Activated B cell treated with CpG ODN at 0.5 μM for 24 hours (primary cell): ENCODE measurements at regions of chr17 and their contacts with region 1.

Region 1: DNA sequence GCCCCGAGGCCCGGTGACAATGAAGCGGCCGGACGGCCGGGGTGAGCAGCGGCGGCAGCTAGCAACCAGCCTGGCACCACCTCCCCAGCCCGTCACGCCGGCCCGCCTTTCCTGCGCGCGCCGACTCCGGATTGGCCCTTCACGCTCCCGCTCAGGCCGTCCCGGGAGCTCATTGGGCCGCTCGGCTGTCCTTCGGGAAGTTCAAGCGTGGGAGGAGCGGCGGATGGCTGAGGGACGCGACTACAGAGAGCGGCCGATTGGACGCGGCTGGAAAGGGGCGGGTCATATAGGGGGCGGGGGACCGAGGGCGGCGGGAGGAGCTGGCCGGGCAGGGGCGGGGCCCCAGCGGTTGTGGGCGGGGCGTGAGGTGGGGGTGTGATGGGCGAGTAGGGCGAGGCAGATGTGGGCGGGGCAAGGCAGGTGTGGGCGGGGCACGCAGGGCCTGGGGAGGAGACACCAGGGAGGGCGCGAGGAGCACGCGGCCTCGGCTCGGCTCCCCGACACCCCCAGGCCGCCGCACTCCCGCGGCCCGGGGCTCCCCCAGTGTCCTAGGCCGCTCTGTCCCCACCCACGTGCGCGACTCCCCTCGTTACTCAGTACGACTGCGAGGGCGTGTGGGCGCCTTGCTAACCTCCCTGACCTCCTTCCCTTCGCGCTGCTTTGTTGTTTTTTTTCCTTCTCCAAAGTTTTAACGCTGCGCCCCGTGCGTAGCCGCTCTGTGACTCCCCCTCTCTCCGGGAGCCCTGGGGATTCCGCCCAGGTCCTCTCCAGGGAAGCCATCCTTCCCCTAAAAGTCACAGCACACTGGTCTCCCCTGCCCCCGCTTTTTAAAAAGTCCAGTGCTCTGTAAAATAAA is at the start of gene CEP131:
- DNase-seq: peak; percentile 100
- ATAC-seq: peak; percentile 89
- H3K4me3 Mint-ChIP-seq: peak within 1 kb of the TSS; percentile 85
- H3K27ac Mint-ChIP-seq: peak within 1 kb of the TSS; percentile 91
- H3K4me1 Mint-ChIP-seq: peaks cover 33% of the 10 kb centered on the region
- H3K27me3 Mint-ChIP-seq: no peaks in the 10 kb centered on the region
- CTCF ChIP-seq: no peak
- total RNA-seq, gene CEP131: 14.2 and 15.9 TPM in 2 replicates

Region 2: DNA sequence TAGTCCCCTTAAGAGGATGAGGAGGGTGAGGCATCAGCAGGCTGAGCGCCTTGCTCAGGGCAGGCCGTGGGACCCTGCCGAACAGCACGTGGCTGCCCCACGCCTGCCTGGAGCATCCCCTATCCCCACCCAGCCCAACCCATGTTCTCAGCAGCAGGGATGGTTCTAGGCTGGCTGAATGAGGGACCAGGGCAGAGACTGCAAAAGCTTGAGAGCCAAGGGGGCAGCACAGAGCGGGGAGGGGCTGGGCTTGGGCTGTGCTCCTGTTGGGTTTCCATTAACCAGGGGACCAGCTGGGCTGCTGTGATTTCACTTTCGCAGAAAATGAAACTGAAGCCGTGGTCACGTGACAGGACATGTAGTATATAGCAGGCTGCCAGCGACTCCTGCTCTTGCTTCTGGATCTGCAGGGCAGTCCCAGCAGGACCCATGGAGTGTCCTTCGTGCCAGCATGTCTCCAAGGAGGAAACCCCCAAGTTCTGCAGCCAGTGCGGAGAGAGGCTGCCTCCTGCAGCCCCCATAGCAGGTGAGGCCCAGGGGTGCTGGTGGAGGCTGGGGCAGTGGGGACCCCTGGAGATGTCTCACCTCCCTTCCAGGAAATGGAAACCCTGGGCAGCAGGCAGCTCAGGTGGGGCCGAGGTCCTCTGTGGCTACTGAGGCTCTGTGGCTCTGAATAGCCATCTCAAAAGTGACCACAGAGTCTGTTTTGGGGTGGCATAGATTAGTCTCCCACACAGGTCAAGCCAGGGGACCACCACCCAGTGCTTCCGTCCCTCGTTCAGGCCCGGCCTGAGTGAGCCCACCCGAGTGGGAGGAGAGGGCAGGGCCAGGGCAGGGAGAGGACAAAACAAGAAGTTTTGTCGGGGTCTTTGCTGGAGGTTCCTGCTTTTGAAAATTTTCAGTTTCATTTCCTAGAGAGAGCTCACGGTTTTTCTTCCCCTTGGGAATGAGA is 959.6 kb before region 1 on chr17:
- CTCF ChIA-PET with region 1: no interaction called
- POLR2A ChIA-PET with region 1: no interaction called
- intact Hi-C with region 1: loop called (anchors 5 kb)
- DNase-seq: peak; percentile 73
- ATAC-seq: peak; percentile 64
- H3K4me3 Mint-ChIP-seq: peak overlapping the region; percentile 93
- H3K27ac Mint-ChIP-seq: peak overlapping the region; percentile 90
- H3K4me1 Mint-ChIP-seq: peaks cover 64% of the 10 kb centered on the region
- H3K27me3 Mint-ChIP-seq: no peaks in the 10 kb centered on the region
- CTCF ChIP-seq: no peak

Region 3: DNA sequence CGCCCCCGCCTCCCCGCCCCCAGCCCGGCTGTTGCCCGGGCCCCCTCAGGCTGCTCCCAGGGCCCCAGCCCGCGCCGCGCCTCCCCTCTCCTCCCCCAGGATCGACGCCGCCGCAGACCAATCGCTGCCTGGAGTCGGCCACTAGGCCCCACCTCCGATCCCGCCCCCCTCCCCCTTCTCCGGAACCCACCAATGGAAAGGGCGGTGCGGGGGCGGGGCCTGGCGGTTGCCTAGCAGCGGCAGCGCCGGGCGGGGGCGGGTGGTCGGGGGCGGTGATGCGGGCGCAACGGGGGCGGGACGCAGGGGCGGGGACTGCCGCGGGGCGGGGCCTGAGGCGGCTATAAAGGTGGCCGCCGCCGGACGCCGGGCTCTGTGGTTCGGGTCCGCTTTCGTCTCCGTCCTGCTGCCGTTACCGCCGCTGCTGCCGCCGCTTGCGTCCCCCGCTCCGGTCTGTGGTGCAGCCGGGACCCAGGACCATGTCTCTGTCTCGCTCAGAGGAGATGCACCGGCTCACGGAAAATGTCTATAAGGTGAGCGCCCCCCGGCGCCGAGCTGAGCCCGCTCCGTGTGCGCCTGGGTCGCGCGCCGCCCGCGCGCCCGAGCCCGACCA is 188.2 kb before region 1 on chr17 and contains the start of gene BAIAP2:
- CTCF ChIA-PET with region 1: no interaction called
- POLR2A ChIA-PET with region 1: no interaction called
- intact Hi-C with region 1: loop called (anchors 1 kb)
- DNase-seq: peak; percentile 91
- ATAC-seq: peak; percentile 88
- H3K4me3 Mint-ChIP-seq: peak within 1 kb of the TSS; percentile 88
- H3K27ac Mint-ChIP-seq: peak within 1 kb of the TSS; percentile 69
- H3K4me1 Mint-ChIP-seq: peaks cover 12% of the 10 kb centered on the region
- H3K27me3 Mint-ChIP-seq: peaks cover 40% of the 10 kb centered on the region
- CTCF ChIP-seq: no peak
- total RNA-seq, gene BAIAP2: 5.3 and 6.8 TPM in 2 replicates

Region 4: DNA sequence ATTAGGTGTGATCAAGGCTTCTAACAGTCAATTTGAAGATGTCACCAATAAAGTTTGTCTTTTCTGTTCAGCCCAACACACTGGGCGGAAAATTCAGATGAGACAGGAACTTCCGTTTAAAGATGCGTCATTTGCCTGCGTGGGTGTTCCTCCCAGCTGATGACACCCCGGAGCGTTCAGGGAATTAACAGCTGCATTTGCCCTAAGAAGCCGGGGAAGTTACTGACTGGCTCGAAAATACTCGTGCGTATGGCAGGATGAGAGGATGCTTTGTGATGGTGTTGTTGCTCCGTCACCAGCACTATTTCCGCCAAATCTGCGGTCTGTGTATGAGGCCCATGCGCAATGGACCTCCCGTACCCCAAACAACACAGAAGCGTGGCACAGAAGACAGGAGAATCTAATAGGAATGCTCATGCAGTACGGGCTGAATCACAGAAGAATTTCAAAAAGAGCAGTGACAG is 69.8 kb before region 1 on chr17:
- CTCF ChIA-PET with region 1: no interaction called
- POLR2A ChIA-PET with region 1: interaction called, 3 read pairs
- intact Hi-C with region 1: loop called (anchors 10 kb)
- DNase-seq: no peak
- ATAC-seq: peak; percentile 77
- H3K4me3 Mint-ChIP-seq: peak overlapping the region; percentile 44
- H3K27ac Mint-ChIP-seq: peak overlapping the region; percentile 68
- H3K4me1 Mint-ChIP-seq: peaks cover 7% of the 10 kb centered on the region
- H3K27me3 Mint-ChIP-seq: peaks cover 11% of the 10 kb centered on the region
- CTCF ChIP-seq: no peak

Region 5: GRCh38 chr17:81346090-81346907 is 123.2 kb after region 1 on chr17:
- CTCF ChIA-PET with region 1: no interaction called
- POLR2A ChIA-PET with region 1: no interaction called
- intact Hi-C with region 1: loop called (anchors 2 kb)
- DNase-seq: peak; percentile 87
- ATAC-seq: peak; percentile 96
- H3K4me3 Mint-ChIP-seq: peak overlapping the region; percentile 74
- H3K27ac Mint-ChIP-seq: no peak overlapping the region
- H3K4me1 Mint-ChIP-seq: peaks cover 20% of the 10 kb centered on the region
- H3K27me3 Mint-ChIP-seq: peaks cover 24% of the 10 kb centered on the region
- CTCF ChIP-seq: no peak